ENCODE measurements at regions of chr17 and their contacts with region 1.

Region 1: DNA sequence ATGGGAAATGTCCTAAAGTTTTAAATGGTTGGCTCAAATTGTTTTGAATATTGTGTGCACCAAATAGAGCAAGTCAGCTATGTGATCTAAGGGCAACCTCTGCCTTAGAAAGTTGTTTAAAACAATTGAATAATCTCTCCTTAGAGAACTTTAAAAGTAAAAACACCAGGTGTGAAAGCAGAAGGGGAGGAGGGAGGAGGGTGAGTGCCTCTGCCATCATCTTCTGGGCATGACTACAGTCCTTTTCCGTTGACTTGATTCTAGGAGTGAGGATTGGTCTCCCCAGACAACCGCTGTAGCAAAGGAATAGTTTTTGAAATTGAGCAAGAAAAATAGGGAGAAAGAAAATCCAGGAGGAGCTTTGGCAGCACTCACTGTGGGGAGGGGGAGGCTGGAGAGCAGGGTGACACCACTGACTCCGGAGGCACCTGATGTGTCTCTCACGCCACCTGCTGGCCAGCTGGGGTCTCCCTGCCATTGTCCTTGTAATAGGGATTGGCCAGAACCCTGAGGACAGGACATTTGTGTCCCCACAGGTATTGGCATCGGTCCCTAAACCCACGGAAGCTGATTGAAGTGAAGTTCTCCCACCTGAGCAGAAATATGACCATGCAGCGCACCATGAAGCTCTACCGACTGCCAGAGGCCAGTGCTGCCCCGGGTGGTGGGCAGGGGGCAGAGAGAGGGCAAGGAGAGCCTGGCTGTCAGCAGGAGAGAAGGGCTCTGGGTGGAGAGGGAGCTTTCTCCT is 33.3 kb downstream of the PLCD3 start:
- DNase-seq: peak; percentile 58 to 76 (median 67)
- H3K4me3 ChIP-seq: no peak overlapping the region
- H3K4me3 Mint-ChIP-seq: no peak overlapping the region
- H3K27ac ChIP-seq: no peak overlapping the region
- H3K27ac Mint-ChIP-seq: peak overlapping the region in 3 of 7 donors; percentile 59 to 66 (median 66)
- H3K4me1 ChIP-seq: no peaks in the 10 kb centered on the region
- H3K4me1 Mint-ChIP-seq: no peaks in the 10 kb centered on the region
- H3K27me3 ChIP-seq: no peaks in the 10 kb centered on the region
- H3K27me3 Mint-ChIP-seq: no peaks in the 10 kb centered on the region

Region 2: GRCh38 chr17:44767493-44767892 is 331.6 kb before region 1 on chr17:
- CTCF ChIA-PET with region 1: no interaction called
- POLR2A ChIA-PET with region 1: no interaction called
- intact Hi-C with region 1: no loop called
- DNase-seq: no peak
- H3K4me3 ChIP-seq: no peak overlapping the region
- H3K4me3 Mint-ChIP-seq: no peak overlapping the region
- H3K27ac ChIP-seq: no peak overlapping the region
- H3K27ac Mint-ChIP-seq: no peak overlapping the region
- H3K4me1 ChIP-seq: no peaks in the 10 kb centered on the region
- H3K4me1 Mint-ChIP-seq: peaks cover 0 to 2% (median 0%) of the 10 kb centered on the region in 4 donors
- H3K27me3 ChIP-seq: no peaks in the 10 kb centered on the region
- H3K27me3 Mint-ChIP-seq: peaks cover 14 to 21% of the 10 kb centered on the region in 2 donors

Region 3: GRCh38 chr17:44919885-44920564 is 179.0 kb before region 1 on chr17:
- CTCF ChIA-PET with region 1: interaction called, 40 read pairs
- POLR2A ChIA-PET with region 1: interaction called, 5 read pairs
- intact Hi-C with region 1: loop called (anchors 1 kb)
- DNase-seq: peak in 4 of 5 donors; percentile 45 to 50 (median 48)
- H3K4me3 ChIP-seq: no peak overlapping the region
- H3K4me3 Mint-ChIP-seq: no peak overlapping the region
- H3K27ac ChIP-seq: no peak overlapping the region
- H3K27ac Mint-ChIP-seq: no peak overlapping the region
- H3K4me1 ChIP-seq: no peaks in the 10 kb centered on the region
- H3K4me1 Mint-ChIP-seq: peaks cover 0 to 3% (median 0%) of the 10 kb centered on the region in 4 donors
- H3K27me3 ChIP-seq: no peaks in the 10 kb centered on the region
- H3K27me3 Mint-ChIP-seq: peaks cover 4 to 6% of the 10 kb centered on the region in 2 donors

Region 4: GRCh38 chr17:44961921-44962350 is 137.1 kb before region 1 on chr17:
- CTCF ChIA-PET with region 1: no interaction called
- POLR2A ChIA-PET with region 1: no interaction called
- intact Hi-C with region 1: no loop called
- DNase-seq: no peak
- H3K4me3 ChIP-seq: no peak overlapping the region
- H3K4me3 Mint-ChIP-seq: no peak overlapping the region
- H3K27ac ChIP-seq: no peak overlapping the region
- H3K27ac Mint-ChIP-seq: no peak overlapping the region
- H3K4me1 ChIP-seq: peaks cover 10% of the 10 kb centered on the region
- H3K4me1 Mint-ChIP-seq: peaks cover 3 to 27% (median 6%) of the 10 kb centered on the region in 4 donors
- H3K27me3 ChIP-seq: peaks cover 20% of the 10 kb centered on the region
- H3K27me3 Mint-ChIP-seq: peaks cover 34 to 49% of the 10 kb centered on the region in 2 donors

Region 5: DNA sequence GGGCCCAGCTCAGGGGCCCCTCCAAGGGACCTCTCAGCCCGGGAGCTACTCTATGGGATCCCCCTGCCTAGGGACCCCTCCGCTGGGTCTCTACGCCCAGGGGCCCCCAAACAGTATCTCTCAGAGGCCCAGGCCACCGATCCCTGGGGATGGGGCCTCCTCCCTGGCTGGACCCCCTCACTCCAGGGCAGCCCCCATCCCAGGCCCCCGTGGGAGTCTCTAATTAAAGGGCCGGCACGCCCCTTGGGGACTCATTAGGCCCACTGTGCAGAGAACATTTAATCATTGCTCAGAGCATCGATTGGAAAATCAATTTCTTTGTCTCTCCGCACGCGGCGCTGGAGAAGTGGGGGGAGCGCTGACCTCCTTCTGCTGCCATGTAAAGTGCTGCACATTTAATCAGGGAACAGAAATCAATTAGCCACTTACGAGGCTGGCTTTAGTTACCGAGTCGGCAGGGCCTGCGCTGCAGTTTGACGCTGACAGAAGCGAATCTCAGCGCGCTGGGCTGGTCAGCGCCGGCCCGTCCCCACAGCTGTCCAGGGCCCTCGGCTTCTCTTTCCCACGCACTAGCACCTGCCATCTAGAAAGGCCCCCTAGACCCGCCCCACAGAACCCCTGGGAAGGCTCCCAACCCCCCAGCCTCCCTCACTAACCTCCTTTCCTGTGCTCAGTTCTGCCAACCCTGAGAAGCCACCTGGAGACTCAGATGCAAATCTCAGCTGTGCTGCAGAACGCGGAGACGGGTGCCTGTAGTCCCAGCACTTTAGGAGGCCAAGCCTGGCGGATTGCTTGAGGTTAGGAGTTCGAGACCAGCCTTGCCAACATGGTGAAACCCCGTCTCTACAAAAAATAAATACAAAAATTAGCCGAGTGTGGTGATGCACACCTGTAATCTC is 110.8 kb before region 1 on chr17:
- CTCF ChIA-PET with region 1: no interaction called
- POLR2A ChIA-PET with region 1: no interaction called
- intact Hi-C with region 1: no loop called
- DNase-seq: no peak
- H3K4me3 ChIP-seq: no peak overlapping the region
- H3K4me3 Mint-ChIP-seq: no peak overlapping the region
- H3K27ac ChIP-seq: no peak overlapping the region
- H3K27ac Mint-ChIP-seq: no peak overlapping the region
- H3K4me1 ChIP-seq: no peaks in the 10 kb centered on the region
- H3K4me1 Mint-ChIP-seq: no peaks in the 10 kb centered on the region
- H3K27me3 ChIP-seq: peaks cover 15% of the 10 kb centered on the region
- H3K27me3 Mint-ChIP-seq: peaks cover 18 to 23% of the 10 kb centered on the region in 2 donors

Region 6: DNA sequence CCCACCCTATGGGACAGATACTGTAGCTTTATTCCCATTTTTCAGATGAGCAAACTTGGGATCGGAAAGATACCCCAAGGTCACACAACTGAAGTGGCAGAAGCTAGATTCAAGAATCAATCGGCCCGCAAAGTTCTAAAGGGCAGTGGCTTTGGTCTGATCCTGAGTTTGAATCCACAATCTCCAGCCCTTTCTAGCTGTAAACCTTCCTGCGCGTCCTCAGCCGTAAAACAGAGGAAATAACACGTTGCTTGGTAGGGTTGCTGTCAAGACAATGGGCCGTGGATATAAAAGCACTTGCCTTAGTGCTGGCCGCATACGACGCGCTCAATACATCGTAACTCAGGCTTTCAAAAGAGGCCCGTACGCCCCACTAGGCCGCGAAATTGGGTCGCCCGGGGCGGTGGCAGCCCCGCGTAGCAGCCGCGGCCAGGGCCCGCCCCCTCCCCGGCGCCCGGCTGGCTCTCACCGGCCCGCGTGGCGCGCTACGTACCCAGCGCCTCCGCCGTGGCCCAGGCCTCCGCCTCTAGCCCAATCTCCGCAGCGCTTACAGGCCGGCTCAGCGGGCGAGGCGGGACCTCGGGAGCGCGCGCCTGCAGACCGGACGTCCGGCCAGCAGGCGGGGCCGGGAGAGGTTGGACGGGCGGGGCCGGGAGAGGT is 47.9 kb before region 1 on chr17 and contains the start of gene DCAKD:
- CTCF ChIA-PET with region 1: interaction called, 4 read pairs
- POLR2A ChIA-PET with region 1: no interaction called
- intact Hi-C with region 1: loop called (anchors 5 kb)
- DNase-seq: peak; percentile 88 to 91 (median 89)
- H3K4me3 ChIP-seq: peak within 1 kb of the TSS; percentile 66 to 98
- H3K4me3 Mint-ChIP-seq: peak within 1 kb of the TSS; percentile 87 to 95 (median 89)
- H3K27ac ChIP-seq: peak within 1 kb of the TSS; percentile 96
- H3K27ac Mint-ChIP-seq: peak within 1 kb of the TSS; percentile 93 to 98 (median 96)
- H3K4me1 ChIP-seq: peaks cover 42% of the 10 kb centered on the region
- H3K4me1 Mint-ChIP-seq: peaks cover 18 to 46% (median 31%) of the 10 kb centered on the region in 4 donors
- H3K27me3 ChIP-seq: no peaks in the 10 kb centered on the region
- H3K27me3 Mint-ChIP-seq: no peaks in the 10 kb centered on the region
- total RNA-seq, gene DCAKD: 32.0 to 32.1 TPM

Region 7: GRCh38 chr17:45087504-45087975 is 11.5 kb before region 1 on chr17:
- CTCF ChIA-PET with region 1: interaction called, 17 read pairs
- POLR2A ChIA-PET with region 1: no interaction called
- intact Hi-C with region 1: no loop called
- DNase-seq: no peak
- H3K4me3 ChIP-seq: no peak overlapping the region
- H3K4me3 Mint-ChIP-seq: no peak overlapping the region
- H3K27ac ChIP-seq: no peak overlapping the region
- H3K27ac Mint-ChIP-seq: peak overlapping the region in 2 of 7 donors; percentile 23 to 42
- H3K4me1 ChIP-seq: no peaks in the 10 kb centered on the region
- H3K4me1 Mint-ChIP-seq: peaks cover 0 to 3% (median 1%) of the 10 kb centered on the region in 4 donors
- H3K27me3 ChIP-seq: no peaks in the 10 kb centered on the region
- H3K27me3 Mint-ChIP-seq: no peaks in the 10 kb centered on the region

Region 8: GRCh38 chr17:45172454-45173286 is 73.6 kb after region 1 on chr17:
- CTCF ChIA-PET with region 1: no interaction called
- POLR2A ChIA-PET with region 1: no interaction called
- intact Hi-C with region 1: no loop called
- DNase-seq: peak; percentile 21 to 44 (median 35)
- H3K4me3 ChIP-seq: peak overlapping the region; percentile 11 to 46
- H3K4me3 Mint-ChIP-seq: peak overlapping the region; percentile 69 to 87 (median 79)
- H3K27ac ChIP-seq: peak overlapping the region; percentile 17
- H3K27ac Mint-ChIP-seq: peak overlapping the region; percentile 43 to 91 (median 87)
- H3K4me1 ChIP-seq: peaks cover 16% of the 10 kb centered on the region
- H3K4me1 Mint-ChIP-seq: peaks cover 5 to 17% (median 12%) of the 10 kb centered on the region in 4 donors
- H3K27me3 ChIP-seq: no peaks in the 10 kb centered on the region
- H3K27me3 Mint-ChIP-seq: no peaks in the 10 kb centered on the region